Colonic mucosa (tissue), 4 donors: ENCODE measurements at regions of chr4 and their contacts with region 1.

Region 1: GRCh38 chr4:11805842-11806241 is 377.1 kb upstream of the HS3ST1 start:
- DNase-seq: no peak
- H3K4me3 ChIP-seq: no peak overlapping the region
- H3K27ac ChIP-seq: no peak overlapping the region
- H3K4me1 ChIP-seq: no peaks in the 10 kb centered on the region
- H3K27me3 ChIP-seq: no peaks in the 10 kb centered on the region
- CTCF ChIP-seq: peak; percentile 41

Region 2: GRCh38 chr4:11912886-11913285 is 107.0 kb after region 1 on chr4:
- intact Hi-C with region 1: no loop called
- DNase-seq: no peak
- H3K4me3 ChIP-seq: no peak overlapping the region
- H3K27ac ChIP-seq: no peak overlapping the region
- H3K4me1 ChIP-seq: no peaks in the 10 kb centered on the region
- H3K27me3 ChIP-seq: no peaks in the 10 kb centered on the region
- CTCF ChIP-seq: no peak

Region 3: DNA sequence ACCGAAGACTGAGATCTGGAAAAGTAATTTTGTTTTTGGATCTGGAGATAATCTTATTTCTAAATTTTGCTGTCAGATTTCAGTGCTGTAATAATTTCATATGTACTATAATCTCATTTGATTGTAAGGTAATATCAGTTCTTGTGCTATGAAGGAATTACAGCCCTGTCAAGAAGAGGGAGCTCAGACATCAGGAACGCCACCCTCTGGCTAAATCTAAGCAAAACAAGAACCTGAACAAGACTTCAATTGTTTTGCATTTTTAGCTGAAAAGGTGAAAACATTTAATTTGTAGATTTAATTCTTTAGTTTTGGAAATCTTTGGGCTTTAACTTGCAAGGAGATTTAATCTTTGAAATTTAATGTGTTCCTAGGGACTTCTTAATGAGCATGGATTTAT is 148.3 kb after region 1 on chr4:
- intact Hi-C with region 1: loop called (anchors 5 kb)
- DNase-seq: peak; percentile 23
- H3K4me3 ChIP-seq: no peak overlapping the region
- H3K27ac ChIP-seq: no peak overlapping the region
- H3K4me1 ChIP-seq: no peaks in the 10 kb centered on the region
- H3K27me3 ChIP-seq: no peaks in the 10 kb centered on the region
- CTCF ChIP-seq: no peak